ENCODE measurements at regions of chr17 and their contacts with region 1.

Region 1: GRCh38 chr17:16380640-16381495 is at the start of gene UBB:
- DNase-seq: peak; percentile 86 to 98 (median 96)
- ATAC-seq: peak; percentile 95 to 96
- H3K4me3 Mint-ChIP-seq: peak within 1 kb of the TSS; percentile 89 to 99 (median 92)
- H3K27ac Mint-ChIP-seq: peak within 1 kb of the TSS; percentile 96 to 100 (median 99)
- H3K4me1 Mint-ChIP-seq: peaks cover 14 to 47% (median 44%) of the 10 kb centered on the region in 4 donors
- H3K27me3 Mint-ChIP-seq: peaks cover 0 to 4% (median 0%) of the 10 kb centered on the region in 5 donors
- polyA plus RNA-seq, gene UBB: 1,803 to 2,753 (median 2,352) TPM

Region 2: GRCh38 chr17:16285957-16286640 is 94.8 kb before region 1 on chr17:
- POLR2A ChIA-PET with region 1: interaction called, 16 read pairs
- DNase-seq: peak; percentile 21 to 83 (median 66)
- ATAC-seq: peak; percentile 92 to 95
- H3K4me3 Mint-ChIP-seq: peak overlapping the region; percentile 67 to 85 (median 80)
- H3K27ac Mint-ChIP-seq: peak overlapping the region; percentile 95 to 99 (median 98)
- H3K4me1 Mint-ChIP-seq: peaks cover 30 to 66% (median 60%) of the 10 kb centered on the region in 4 donors
- H3K27me3 Mint-ChIP-seq: no peaks in the 10 kb centered on the region

Region 3: DNA sequence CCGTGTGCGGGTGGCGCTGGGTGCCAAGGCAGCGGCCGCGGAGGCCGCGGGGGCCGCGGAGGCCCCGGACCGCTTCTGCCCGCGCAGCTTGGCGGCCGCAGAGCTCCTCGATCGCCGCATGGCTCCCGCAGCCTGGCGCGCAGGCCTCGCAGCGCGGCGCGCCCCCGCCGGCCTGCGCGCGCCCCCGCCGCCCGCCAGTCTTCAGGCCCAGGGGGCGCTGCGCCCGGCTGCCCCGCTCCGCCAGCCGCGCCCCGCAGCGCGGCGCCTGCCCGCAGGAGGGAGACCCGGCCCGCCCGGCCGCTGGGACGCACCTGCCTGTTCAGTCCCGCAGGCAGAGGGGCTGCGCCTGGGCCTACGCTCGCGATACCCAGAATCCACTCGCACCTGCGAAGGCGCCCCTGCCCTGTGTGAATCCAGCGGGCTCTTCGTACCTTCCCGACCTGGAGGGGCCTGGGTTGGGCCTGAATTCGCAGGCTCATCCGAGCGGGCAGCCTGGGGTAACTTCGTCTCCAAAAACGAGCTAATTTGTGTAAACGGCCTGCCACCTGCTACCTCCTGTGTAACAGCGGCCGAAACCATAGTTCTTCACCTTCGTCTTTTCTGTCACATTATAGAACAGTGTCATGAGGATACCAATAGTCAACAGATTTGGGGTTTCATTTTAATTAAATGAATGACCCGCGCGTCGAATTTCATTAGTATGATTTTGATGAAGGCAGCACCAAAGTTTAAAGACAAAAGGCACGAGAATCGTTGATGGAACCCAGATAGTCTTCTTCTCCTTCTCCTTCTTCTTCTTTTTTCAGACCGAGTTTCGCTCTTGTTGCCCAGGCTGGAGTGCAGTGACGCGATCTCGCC is 27.3 kb before region 1 on chr17 and contains the start of gene CENPV:
- POLR2A ChIA-PET with region 1: interaction called, 30 read pairs
- DNase-seq: peak; percentile 63 to 85 (median 76)
- ATAC-seq: peak; percentile 86 to 88
- H3K4me3 Mint-ChIP-seq: peak within 1 kb of the TSS; percentile 86 to 97 (median 93)
- H3K27ac Mint-ChIP-seq: peak within 1 kb of the TSS; percentile 74 to 94 (median 90)
- H3K4me1 Mint-ChIP-seq: peaks cover 9 to 27% (median 20%) of the 10 kb centered on the region in 4 donors
- H3K27me3 Mint-ChIP-seq: no peaks in the 10 kb centered on the region
- polyA plus RNA-seq, gene CENPV: 24.7 to 30.9 (median 28.3) TPM

Region 4: DNA sequence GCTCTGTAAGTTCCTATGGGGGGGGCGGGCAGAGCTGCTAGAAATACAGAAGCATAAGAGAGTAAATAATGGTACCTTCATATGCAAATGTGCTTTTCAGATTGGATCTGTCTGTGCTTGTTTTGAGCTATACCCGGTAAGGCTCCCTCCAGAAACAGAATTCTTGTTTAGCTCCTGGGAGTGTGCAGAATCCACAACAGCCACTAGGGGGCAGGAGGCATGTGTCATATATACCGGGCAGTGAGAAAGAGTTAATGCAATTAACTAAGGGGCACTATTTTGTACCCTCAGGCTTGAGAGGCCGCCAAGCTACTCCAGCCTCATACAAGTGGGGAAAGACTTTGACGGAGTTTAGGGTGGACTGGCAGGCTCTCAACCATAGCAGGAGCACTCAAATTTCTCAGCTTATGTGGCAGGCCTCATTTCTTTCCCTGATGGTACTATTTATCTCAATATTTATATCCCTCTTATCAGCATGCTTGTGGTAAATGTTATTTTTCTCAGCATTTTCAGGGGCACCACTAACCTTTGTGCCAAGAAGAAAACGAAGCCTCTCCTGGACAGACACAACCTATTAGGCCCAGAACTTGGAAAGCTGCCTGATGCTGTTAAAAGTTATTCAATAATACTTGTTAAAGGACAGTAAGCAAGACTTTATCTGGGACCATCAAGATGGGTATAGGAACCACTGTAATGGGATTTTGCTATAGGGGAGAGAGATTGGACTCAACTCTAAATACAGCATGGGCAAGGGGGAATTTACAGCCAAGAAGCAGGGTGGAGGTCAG is 16.9 kb before region 1 on chr17:
- POLR2A ChIA-PET with region 1: interaction called, 12 read pairs
- DNase-seq: peak; percentile 50 to 87 (median 68)
- ATAC-seq: peak; percentile 88 to 99
- H3K4me3 Mint-ChIP-seq: no peak overlapping the region
- H3K27ac Mint-ChIP-seq: peak overlapping the region in 1 of 10 donors; percentile 3
- H3K4me1 Mint-ChIP-seq: peaks cover 0 to 3% (median 1%) of the 10 kb centered on the region in 4 donors
- H3K27me3 Mint-ChIP-seq: peaks cover 0 to 2% (median 0%) of the 10 kb centered on the region in 5 donors

Region 5: GRCh38 chr17:16415031-16415924 is 34.4 kb after region 1 on chr17 and contains the start of gene TRPV2:
- POLR2A ChIA-PET with region 1: interaction called, 57 read pairs
- DNase-seq: peak; percentile 23 to 74 (median 52)
- ATAC-seq: peak; percentile 57 to 65
- H3K4me3 Mint-ChIP-seq: peak within 1 kb of the TSS; percentile 93 to 99 (median 98)
- H3K27ac Mint-ChIP-seq: peak within 1 kb of the TSS; percentile 98 to 100 (median 99)
- H3K4me1 Mint-ChIP-seq: peaks cover 12 to 53% (median 51%) of the 10 kb centered on the region in 4 donors
- H3K27me3 Mint-ChIP-seq: no peaks in the 10 kb centered on the region
- polyA plus RNA-seq, gene TRPV2: 87.0 to 109 (median 90.6) TPM

Region 6: DNA sequence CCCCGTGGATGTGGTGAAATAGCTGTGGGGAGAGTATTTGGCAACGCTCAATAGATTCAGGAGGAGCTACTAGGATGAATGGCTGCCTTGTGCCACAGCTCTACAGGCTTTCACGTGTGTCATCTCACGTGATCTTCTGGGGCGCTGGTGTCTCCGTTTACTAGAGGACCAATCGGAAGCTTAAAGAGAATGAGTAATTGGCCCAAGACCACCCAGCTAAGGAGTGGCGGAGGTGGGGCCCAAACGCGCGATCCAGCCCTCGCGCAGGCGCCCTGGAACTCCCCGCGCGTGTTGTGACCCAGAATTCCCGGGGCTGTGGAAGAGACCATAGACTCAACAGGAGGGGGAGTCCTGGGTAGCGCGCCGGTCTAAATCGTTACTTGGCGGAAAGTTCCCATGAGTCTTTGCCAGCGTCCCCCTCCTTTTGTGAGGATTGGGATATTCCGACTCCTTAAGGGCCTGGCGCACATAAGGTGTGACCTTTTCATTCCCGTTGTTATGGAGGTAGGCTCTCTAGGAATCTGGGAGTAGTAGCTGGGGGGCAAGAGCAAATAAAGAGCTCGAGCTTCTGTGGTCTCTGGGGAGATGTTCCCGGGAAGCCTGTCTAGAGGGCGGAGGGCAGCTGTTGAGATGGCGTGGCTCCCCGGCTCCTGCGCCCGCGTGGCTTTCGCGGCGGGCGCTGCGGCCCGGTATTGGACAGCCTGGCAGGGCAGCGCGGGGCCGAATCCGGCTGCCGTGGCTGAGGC is 57.9 kb after region 1 on chr17:
- POLR2A ChIA-PET with region 1: interaction called, 34 read pairs
- DNase-seq: peak; percentile 88 to 98 (median 96)
- ATAC-seq: peak; percentile 89 to 90
- H3K4me3 Mint-ChIP-seq: peak overlapping the region; percentile 98 to 100 (median 99)
- H3K27ac Mint-ChIP-seq: peak overlapping the region; percentile 95 to 99 (median 98)
- H3K4me1 Mint-ChIP-seq: peaks cover 39 to 60% (median 52%) of the 10 kb centered on the region in 4 donors
- H3K27me3 Mint-ChIP-seq: no peaks in the 10 kb centered on the region

Region 7: DNA sequence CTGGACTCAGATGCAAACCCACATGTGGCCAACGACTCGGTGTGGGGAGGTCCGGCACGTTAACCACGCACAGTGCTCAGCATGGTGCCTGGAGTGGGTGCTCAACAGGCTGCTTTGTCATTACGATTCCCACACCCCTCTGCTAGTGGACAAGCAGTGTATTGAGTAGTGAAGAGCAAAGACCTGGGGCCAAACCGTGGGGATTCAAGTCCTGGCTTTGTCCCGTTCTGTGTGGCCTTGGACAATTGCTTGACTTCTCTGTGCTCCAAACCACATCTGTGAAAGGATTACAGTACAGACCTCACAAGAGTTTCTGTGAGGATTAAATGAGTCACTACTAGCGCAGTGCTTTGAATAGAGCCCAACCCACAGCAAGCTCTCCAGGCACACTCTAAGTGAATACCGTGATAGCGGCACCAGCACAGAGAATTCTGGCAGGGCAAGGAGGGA is 68.3 kb after region 1 on chr17:
- POLR2A ChIA-PET with region 1: no interaction called
- DNase-seq: no peak
- ATAC-seq: no peak
- H3K4me3 Mint-ChIP-seq: no peak overlapping the region
- H3K27ac Mint-ChIP-seq: no peak overlapping the region
- H3K4me1 Mint-ChIP-seq: peaks cover 6 to 38% (median 11%) of the 10 kb centered on the region in 4 donors
- H3K27me3 Mint-ChIP-seq: no peaks in the 10 kb centered on the region

Region 8: DNA sequence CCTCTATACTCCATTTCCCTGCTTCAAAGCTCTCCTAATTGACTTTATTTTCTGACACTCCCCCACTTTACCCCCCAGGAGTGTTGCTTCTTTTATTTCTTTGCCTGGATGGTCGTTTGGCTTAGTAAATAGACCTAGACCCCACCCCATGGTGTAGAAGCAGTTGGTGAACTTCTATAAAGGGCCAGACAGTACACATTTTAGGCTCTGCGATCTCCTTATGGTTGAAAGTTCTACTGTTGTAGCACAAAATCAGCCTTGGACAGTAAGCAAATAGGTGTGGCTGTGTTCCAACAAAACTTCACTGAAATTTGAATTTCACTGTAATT is 156.2 kb after region 1 on chr17:
- POLR2A ChIA-PET with region 1: interaction called, 13 read pairs
- DNase-seq: no peak
- ATAC-seq: no peak
- H3K4me3 Mint-ChIP-seq: peak overlapping the region; percentile 0 to 99 (median 96)
- H3K27ac Mint-ChIP-seq: peak overlapping the region in 9 of 10 donors; percentile 86 to 98 (median 95)
- H3K4me1 Mint-ChIP-seq: peaks cover 9 to 26% (median 19%) of the 10 kb centered on the region in 4 donors
- H3K27me3 Mint-ChIP-seq: peaks cover 0 to 3% (median 0%) of the 10 kb centered on the region in 5 donors

Measured in naive thymus-derived CD8-positive, alpha-beta T cell (primary cell).